ENCODE measurements at regions of chr15 and their contacts with region 1.

Region 1: GRCh38 chr15:83404121-83404520 is 43.0 kb upstream of the SH3GL3 start:
- DNase-seq: no peak
- H3K4me3 ChIP-seq: no peak overlapping the region
- H3K27ac ChIP-seq: no peak overlapping the region
- H3K4me1 ChIP-seq: no peaks in the 10 kb centered on the region
- H3K27me3 ChIP-seq: no peaks in the 10 kb centered on the region
- CTCF ChIP-seq: no peak

Region 2: GRCh38 chr15:83504365-83504764 is 100.2 kb after region 1 on chr15:
- CTCF ChIA-PET with region 1: no interaction called
- dilution Hi-C with region 1: loop called (anchors 5 kb)
- in situ Hi-C with region 1: no loop called
- intact Hi-C with region 1: no loop called
- DNase-seq: no peak
- H3K4me3 ChIP-seq: no peak overlapping the region
- H3K27ac ChIP-seq: no peak overlapping the region
- H3K4me1 ChIP-seq: no peaks in the 10 kb centered on the region
- H3K27me3 ChIP-seq: no peaks in the 10 kb centered on the region
- CTCF ChIP-seq: no peak